Activated CD4-positive, alpha-beta T cell treated with anti-CD3 and anti-CD28 coated beads for 36 hours (primary cell): ENCODE measurements at regions of chr15 and their contacts with region 1.

Region 1: DNA sequence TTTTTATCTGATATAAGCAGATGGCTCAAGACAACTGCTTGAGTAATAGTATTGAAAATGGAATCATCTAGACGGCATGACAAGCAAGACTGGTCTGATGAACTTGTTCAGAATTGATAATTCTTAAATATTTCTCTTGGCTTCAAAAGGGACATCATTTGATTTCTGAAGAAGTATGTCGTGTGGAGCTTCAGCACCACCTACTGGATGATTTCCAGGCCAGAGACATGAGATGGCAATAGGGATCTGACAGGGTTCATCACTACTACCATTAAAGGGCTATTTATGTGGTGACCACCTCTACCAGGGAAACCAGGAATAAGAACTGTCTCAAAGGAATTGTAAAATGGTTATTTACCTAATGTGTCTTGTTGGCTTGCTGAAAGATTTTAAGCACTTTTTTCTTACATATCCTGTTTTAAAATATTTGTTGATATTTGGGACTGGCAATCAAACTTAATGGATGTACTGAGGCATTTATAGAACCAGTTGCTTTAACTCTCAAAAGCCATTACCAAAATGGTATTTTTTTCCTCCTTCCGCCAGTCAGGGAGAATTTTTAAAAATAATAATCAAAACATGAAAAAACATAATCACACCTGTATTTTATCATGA is 99.5 kb upstream of the FAM98B start:
- DNase-seq: peak; percentile 75
- ATAC-seq: no peak
- H3K4me3 Mint-ChIP-seq: no peak overlapping the region
- H3K27ac Mint-ChIP-seq: no peak overlapping the region
- H3K4me1 Mint-ChIP-seq: no peaks in the 10 kb centered on the region
- H3K27me3 Mint-ChIP-seq: peaks cover 2% of the 10 kb centered on the region

Region 2: GRCh38 chr15:37764733-37765191 is 589.7 kb before region 1 on chr15:
- CTCF ChIA-PET with region 1: interaction called, 4 read pairs
- POLR2A ChIA-PET with region 1: no interaction called
- intact Hi-C with region 1: loop called in 1 of 2 experiments (anchors 5 kb)
- DNase-seq: peak; percentile 48
- ATAC-seq: peak; percentile 79
- H3K4me3 Mint-ChIP-seq: no peak overlapping the region
- H3K27ac Mint-ChIP-seq: no peak overlapping the region
- H3K4me1 Mint-ChIP-seq: peaks cover 5% of the 10 kb centered on the region
- H3K27me3 Mint-ChIP-seq: peaks cover 2% of the 10 kb centered on the region

Region 3: DNA sequence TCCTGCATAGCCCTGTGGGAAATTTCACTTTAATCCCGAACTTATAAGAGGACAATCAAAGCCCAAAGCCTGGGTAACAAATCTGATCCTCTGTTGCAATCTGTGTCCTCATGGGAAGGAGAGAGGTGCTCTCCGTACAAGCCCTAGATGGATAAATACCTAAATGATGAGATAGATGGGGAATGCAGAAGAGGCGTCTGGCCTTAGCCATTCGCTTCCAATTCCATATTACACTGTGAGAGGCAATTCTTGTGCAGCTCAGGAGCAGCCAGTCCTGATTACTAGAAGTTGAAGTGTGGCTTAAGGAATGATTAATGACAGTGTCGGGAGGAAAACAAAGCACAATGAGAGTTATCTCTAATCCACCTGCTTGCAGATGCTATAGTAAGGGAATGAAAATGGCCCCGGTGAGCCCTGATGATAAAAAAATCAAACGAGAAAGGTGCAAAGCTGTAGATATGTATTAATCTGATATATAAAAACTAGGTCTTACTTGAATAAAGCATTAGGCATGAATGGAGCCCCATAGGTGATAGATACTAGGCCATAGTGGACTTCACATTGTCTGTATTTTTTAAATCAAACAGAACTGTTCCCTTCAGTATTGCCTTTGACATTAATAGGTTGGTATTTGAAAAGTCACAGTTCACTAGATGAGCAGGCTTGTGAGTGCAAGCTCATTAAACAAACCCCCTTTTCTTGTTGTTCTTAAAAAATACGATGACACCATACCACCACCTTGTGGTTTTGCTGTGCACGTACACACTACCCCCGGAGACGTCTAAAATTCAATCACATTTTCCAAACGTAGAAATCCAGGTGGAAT is 474.2 kb before region 1 on chr15:
- CTCF ChIA-PET with region 1: no interaction called
- POLR2A ChIA-PET with region 1: no interaction called
- intact Hi-C with region 1: loop called in 1 of 2 experiments (anchors 10 kb)
- DNase-seq: peak; percentile 7
- ATAC-seq: no peak
- H3K4me3 Mint-ChIP-seq: no peak overlapping the region
- H3K27ac Mint-ChIP-seq: no peak overlapping the region
- H3K4me1 Mint-ChIP-seq: no peaks in the 10 kb centered on the region
- H3K27me3 Mint-ChIP-seq: peaks cover 14% of the 10 kb centered on the region

Region 4: DNA sequence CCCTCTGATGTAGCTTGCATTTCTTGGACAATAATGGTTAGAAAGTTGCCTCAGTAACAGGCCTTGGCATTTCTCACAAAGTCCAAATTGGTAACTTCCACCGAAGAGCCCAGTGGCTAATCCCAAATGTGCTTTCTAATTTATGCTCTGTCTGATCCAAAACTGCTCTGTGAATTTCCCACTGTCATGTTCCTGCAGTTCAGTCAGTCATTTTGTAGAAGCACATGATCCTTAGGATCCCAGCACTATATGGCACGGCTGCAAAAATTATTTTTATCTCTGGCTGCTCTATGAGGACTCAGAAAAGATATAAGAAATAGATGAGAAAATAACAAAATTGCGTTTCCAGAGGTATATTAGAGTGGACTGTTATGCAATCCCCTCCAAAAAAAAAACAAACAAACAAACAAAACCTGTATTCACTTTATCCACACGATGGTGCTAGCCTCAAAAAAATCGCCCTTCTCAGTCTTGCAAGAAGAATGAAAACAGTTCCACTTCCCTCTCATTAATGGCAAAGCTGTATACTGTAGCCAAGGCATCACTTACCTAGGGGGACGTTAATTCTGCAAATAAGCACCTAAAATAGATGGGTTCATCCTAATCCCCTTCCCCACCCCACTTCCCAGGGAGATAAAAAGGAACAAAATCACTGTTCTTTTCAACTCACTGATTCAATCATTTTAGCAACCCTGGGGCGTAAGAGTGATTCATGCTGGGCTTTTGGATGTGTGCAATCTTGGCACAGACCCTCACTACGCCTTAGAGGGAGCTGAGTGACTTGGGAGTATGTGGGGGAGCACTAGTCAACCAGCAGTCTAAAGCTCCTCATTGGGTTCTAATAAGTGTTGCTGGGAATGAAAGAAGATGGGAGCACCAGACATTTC is 358.7 kb before region 1 on chr15:
- CTCF ChIA-PET with region 1: interaction called, 6 read pairs
- POLR2A ChIA-PET with region 1: no interaction called
- intact Hi-C with region 1: loop called (anchors 1 to 2 kb)
- DNase-seq: peak; percentile 28
- ATAC-seq: no peak
- H3K4me3 Mint-ChIP-seq: no peak overlapping the region
- H3K27ac Mint-ChIP-seq: no peak overlapping the region
- H3K4me1 Mint-ChIP-seq: no peaks in the 10 kb centered on the region
- H3K27me3 Mint-ChIP-seq: peaks cover 15% of the 10 kb centered on the region

Region 5: DNA sequence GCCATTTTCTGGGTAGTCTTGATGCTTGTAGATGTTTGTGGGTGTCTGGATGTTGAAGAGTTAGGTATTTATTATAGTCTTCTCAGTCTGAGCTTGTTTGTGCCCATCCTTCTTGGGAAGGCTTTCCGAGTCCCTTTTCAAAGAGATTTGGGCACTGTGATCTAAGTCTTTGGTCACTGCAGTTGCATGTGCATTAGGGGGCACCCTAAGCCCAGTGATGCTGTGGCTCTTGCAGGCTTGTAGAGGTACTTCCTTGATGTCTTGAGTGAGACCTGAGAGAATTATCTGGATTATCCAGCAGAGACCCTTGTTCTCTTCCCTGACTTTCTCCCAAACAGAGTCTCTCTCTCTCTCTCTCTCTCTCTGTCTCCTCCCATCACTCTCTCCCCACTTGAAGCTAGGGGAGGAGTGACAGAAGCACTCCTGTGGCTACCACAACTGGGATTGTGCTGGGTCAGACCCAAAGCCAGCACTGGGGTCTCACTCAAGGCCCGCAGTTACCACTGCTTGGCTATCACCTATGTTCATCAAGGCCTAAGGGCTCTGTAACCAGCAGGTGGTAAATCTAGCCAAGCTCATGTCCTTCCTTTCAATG is 351.4 kb before region 1 on chr15:
- CTCF ChIA-PET with region 1: interaction called, 3 read pairs
- POLR2A ChIA-PET with region 1: no interaction called
- intact Hi-C with region 1: loop called (anchors 2 kb)
- DNase-seq: peak; percentile 52
- ATAC-seq: no peak
- H3K4me3 Mint-ChIP-seq: no peak overlapping the region
- H3K27ac Mint-ChIP-seq: no peak overlapping the region
- H3K4me1 Mint-ChIP-seq: no peaks in the 10 kb centered on the region
- H3K27me3 Mint-ChIP-seq: peaks cover 6% of the 10 kb centered on the region

Region 6: DNA sequence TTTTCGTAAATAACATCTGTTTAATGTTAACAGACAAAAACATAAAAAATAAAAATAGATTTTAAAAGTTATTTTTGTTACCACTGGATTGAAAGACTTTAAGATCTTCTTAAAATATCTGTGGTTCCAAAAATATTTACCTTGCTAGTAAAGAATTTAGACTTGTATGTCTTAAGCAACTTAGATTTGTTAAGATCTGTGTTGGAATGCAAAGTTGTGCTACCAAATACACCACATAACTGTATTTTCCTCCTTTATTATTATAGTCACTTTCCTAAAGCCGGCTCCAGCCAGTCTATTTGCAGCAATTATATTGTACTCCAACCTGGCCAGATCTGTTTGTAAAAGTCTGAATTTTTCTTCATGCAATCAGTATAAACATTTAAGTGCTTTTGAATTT is 38.1 kb before region 1 on chr15:
- CTCF ChIA-PET with region 1: no interaction called
- POLR2A ChIA-PET with region 1: no interaction called
- intact Hi-C with region 1: no loop called
- DNase-seq: no peak
- ATAC-seq: no peak
- H3K4me3 Mint-ChIP-seq: no peak overlapping the region
- H3K27ac Mint-ChIP-seq: no peak overlapping the region
- H3K4me1 Mint-ChIP-seq: no peaks in the 10 kb centered on the region
- H3K27me3 Mint-ChIP-seq: peaks cover 13% of the 10 kb centered on the region

Region 7: GRCh38 chr15:38389924-38390542 is 35.6 kb after region 1 on chr15:
- CTCF ChIA-PET with region 1: interaction called, 10 read pairs
- POLR2A ChIA-PET with region 1: no interaction called
- intact Hi-C with region 1: no loop called
- DNase-seq: peak; percentile 80
- ATAC-seq: peak; percentile 78
- H3K4me3 Mint-ChIP-seq: no peak overlapping the region
- H3K27ac Mint-ChIP-seq: no peak overlapping the region
- H3K4me1 Mint-ChIP-seq: no peaks in the 10 kb centered on the region
- H3K27me3 Mint-ChIP-seq: peaks cover 11% of the 10 kb centered on the region